PC-9 (cell line): ENCODE measurements at regions of chr6 and their contacts with region 1.

Region 1: GRCh38 chr6:18166312-18167036 is 11.3 kb downstream of the KDM1B start:
- DNase-seq: no peak
- H3K4me3 ChIP-seq: no peak overlapping the region
- H3K27ac ChIP-seq: no peak overlapping the region
- H3K4me1 ChIP-seq: 0 out of 2 replicates have a peak, but pooled peaks cover 2% of the 10 kb centered on the region
- H3K27me3 ChIP-seq: no peaks in the 10 kb centered on the region
- CTCF ChIP-seq: no peak

Region 2: GRCh38 chr6:18515767-18516166 is 349.3 kb after region 1 on chr6:
- CTCF ChIA-PET with region 1: interaction called, 13 read pairs
- POLR2A ChIA-PET with region 1: no interaction called
- intact Hi-C with region 1: no loop called
- DNase-seq: no peak
- H3K4me3 ChIP-seq: no peak overlapping the region
- H3K27ac ChIP-seq: no peak overlapping the region
- H3K4me1 ChIP-seq: no peaks in the 10 kb centered on the region
- H3K27me3 ChIP-seq: no peaks in the 10 kb centered on the region
- CTCF ChIP-seq: no peak

Region 3: GRCh38 chr6:18680842-18681241 is 514.4 kb after region 1 on chr6:
- CTCF ChIA-PET with region 1: no interaction called
- POLR2A ChIA-PET with region 1: no interaction called
- intact Hi-C with region 1: no loop called
- DNase-seq: no peak
- H3K4me3 ChIP-seq: no peak overlapping the region
- H3K27ac ChIP-seq: no peak overlapping the region
- H3K4me1 ChIP-seq: no peaks in the 10 kb centered on the region
- H3K27me3 ChIP-seq: no peaks in the 10 kb centered on the region
- CTCF ChIP-seq: no peak